ENCODE measurements at regions of chr5 and their contacts with region 1.

Region 1: DNA sequence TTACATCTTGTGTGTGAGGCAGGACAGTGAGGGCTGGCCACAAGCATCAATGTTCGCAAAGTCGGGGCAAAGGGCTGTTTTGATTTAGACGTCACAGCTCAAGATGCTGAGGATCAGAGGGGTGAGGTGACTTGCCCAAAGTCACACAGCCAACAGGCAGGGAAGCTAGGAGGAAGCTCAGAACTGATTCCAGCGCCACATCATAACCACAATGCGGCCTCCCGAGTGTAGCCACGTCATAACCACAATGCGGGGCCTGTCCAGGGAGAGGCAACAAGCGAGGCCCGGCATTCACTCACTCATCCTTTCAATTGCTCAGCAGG is 14.2 kb downstream of the STK10 start:
- DNase-seq: peak; percentile 74
- ATAC-seq: peak; percentile 10
- H3K4me3 Mint-ChIP-seq: peak overlapping the region; percentile 89
- H3K27ac Mint-ChIP-seq: peak overlapping the region; percentile 96
- H3K4me1 Mint-ChIP-seq: peaks cover 81% of the 10 kb centered on the region
- H3K27me3 Mint-ChIP-seq: no peaks in the 10 kb centered on the region

Region 2: DNA sequence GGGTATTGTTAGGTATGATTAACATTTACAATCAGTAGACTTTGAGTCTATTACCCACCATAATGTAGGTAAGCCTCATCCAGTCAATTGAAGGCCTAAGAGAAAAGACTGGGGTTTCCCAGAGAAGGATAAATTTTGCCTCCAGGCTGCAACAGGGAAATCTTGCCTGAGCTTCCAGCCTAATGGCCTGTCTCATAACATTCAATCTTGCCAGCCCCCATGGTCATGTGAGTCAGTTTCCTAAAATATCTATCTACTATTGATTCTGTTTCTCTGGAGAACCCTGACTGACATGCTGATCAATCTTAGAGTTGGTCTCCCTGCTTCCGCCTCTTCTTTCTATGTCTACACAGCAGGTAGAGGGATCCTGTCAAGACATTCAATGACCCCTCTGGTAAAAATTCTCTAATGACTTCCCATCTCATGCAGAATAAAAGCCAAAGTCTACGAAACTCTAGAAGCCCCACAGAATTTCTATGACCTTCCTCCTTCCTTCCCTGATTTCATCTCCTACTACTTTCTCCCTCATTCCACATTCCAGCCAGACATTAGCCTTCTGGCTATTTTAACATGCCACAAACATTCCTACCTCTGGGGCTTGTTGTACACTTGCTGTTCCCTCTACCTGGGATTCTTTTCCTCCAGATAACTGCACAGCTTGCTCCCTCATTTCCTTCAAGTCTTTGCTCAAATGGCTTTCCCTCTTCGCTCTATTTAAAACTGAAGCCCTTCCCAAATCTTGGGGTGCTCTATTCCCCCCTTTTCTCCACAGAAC is 227.6 kb before region 1 on chr5:
- POLR2A ChIA-PET with region 1: no interaction called
- DNase-seq: no peak
- ATAC-seq: no peak
- H3K4me3 Mint-ChIP-seq: no peak overlapping the region
- H3K27ac Mint-ChIP-seq: no peak overlapping the region
- H3K4me1 Mint-ChIP-seq: peaks cover 16% of the 10 kb centered on the region
- H3K27me3 Mint-ChIP-seq: no peaks in the 10 kb centered on the region

Region 3: GRCh38 chr5:172150514-172151425 is 23.0 kb before region 1 on chr5:
- POLR2A ChIA-PET with region 1: interaction called, 15 read pairs
- DNase-seq: peak; percentile 54
- ATAC-seq: peak; percentile 79
- H3K4me3 Mint-ChIP-seq: peak overlapping the region; percentile 73
- H3K27ac Mint-ChIP-seq: peak overlapping the region; percentile 71
- H3K4me1 Mint-ChIP-seq: peaks cover 41% of the 10 kb centered on the region
- H3K27me3 Mint-ChIP-seq: no peaks in the 10 kb centered on the region

Region 4: DNA sequence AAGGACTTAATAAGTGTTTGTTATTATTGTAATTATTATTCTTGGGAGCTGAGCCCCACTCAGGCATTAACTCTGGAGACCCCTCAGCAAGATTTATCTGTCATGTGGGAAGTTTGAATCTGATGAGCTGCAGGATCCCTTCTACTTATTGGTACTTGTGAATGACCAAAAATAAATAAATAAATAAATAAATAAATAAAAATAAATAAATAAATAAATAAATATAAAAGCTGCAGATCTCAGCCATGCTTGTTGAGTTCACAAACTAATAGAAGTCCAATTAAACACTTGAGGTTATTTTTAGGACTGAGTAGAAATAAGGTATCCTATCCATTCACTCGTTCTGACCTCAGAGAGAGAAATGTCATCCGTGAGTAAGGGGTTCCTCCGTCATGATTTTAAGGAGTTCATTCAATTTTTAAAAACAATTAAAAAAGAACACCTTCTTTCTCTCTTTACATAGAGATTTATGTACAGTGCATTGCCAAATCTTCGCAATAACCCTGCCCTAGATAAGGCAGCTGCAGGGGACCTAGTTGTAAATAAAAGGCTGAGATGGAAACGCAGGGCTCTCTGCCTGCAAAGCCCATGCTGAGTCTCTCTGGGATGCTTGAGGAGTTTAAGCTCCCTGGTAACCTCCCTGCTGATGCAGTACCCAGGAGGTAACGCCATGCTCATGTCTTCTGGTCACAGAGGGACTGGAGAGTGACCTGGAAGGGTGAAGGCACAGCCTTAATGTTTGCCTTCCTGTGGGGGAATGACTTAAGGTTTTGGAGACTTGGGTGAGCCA is 21.4 kb after region 1 on chr5:
- POLR2A ChIA-PET with region 1: no interaction called
- DNase-seq: no peak
- ATAC-seq: no peak
- H3K4me3 Mint-ChIP-seq: no peak overlapping the region
- H3K27ac Mint-ChIP-seq: no peak overlapping the region
- H3K4me1 Mint-ChIP-seq: peaks cover 2% of the 10 kb centered on the region
- H3K27me3 Mint-ChIP-seq: peaks cover 14% of the 10 kb centered on the region

Measured in activated naive CD8-positive, alpha-beta T cell treated with anti-CD3 and anti-CD28 coated beads, Interleukin-2, amount 10 ng/mL, durations not matched to agents 7 days and 5 days (primary cell).